Ascending aorta (tissue), 2 donors: ENCODE measurements at regions of chr20 and their contacts with region 1.

Region 1: GRCh38 chr20:5529331-5530148 is 212.8 kb upstream of the PROKR2 start:
- DNase-seq: peak; percentile 31 to 83
- H3K4me3 ChIP-seq: peak overlapping the region in 1 of 2 donors; percentile 47
- H3K27ac ChIP-seq: no peak overlapping the region
- H3K4me1 ChIP-seq: no peaks in the 10 kb centered on the region
- H3K27me3 ChIP-seq: no peaks in the 10 kb centered on the region
- CTCF ChIP-seq: peak; percentile 24 to 77 (median 68)

Region 2: DNA sequence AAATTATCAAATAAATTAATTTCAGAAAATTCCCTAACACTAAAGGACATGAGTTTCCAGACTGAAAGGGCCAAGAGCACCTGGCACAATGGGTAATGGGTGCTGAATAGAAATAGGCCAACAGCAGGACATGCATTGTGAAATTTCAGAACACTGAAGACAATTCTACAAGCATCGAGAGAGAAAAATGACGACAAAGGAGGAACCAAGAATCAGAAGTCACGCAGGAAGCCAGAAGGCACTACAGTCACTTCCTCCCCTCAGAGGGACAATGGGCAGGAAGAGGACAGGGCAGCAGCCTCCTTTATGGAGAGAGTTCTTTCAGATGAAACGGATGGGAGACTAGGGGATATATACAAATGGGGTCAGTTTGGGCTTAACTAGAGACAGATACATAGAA is 439.3 kb before region 1 on chr20:
- intact Hi-C with region 1: no loop called
- DNase-seq: no peak
- H3K4me3 ChIP-seq: no peak overlapping the region
- H3K27ac ChIP-seq: no peak overlapping the region
- H3K4me1 ChIP-seq: no peaks in the 10 kb centered on the region
- H3K27me3 ChIP-seq: no peaks in the 10 kb centered on the region
- CTCF ChIP-seq: no peak

Region 3: DNA sequence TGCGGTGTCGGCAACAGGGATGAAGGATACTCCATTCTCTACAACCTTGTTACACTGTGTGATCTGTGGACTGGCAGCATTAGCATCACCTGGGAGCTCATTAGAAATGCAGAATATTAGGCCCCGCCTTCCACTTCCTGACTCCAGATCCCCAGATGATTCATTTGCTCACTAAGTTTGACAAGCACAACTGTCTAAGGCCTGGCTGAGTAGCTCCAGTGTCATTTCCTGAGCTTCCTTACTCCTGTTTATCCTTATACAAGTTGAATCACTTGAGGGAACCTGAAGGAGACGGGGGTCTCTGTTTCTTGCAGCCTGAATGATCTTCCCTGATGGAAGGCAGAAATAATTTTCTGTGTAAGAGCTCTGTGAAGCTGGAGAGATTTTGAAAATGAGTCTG is 180.1 kb before region 1 on chr20:
- intact Hi-C with region 1: no loop called
- DNase-seq: no peak
- H3K4me3 ChIP-seq: no peak overlapping the region
- H3K27ac ChIP-seq: no peak overlapping the region
- H3K4me1 ChIP-seq: no peaks in the 10 kb centered on the region
- H3K27me3 ChIP-seq: no peaks in the 10 kb centered on the region
- CTCF ChIP-seq: no peak

Region 4: DNA sequence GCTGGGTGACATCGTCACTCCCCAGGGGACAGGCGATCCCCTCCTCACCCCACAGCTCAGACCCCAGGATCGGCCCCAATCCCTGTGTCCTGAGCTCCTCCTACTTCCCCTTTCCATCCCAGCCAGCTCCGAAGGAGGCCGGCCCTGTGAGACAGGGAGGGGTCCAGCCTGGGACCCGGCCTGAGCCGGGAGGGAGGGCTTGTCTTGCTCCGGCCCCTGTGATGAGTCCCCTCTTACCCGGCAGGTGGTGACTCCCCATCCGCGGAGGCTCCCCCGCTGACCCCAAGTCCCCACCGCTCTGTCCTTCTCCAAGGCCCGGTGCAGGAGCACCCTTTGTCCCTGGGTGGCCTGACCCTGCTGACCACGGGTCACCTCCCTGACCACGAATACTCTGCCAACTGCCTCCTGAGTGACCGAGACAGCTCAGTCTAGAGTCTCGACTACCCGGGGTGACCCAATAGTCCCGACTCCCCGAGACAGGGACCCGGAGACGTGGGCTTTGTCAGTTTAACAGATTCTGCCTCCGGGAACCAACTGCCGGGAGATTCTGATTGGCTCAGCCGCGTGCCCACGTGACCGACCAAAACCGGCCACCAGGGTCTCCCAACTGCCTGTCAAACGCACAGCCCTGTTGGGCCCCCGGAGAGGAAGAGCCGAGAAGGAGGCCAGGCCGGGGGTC is 25.3 kb before region 1 on chr20:
- intact Hi-C with region 1: no loop called
- DNase-seq: peak in 1 of 2 donors; percentile 70
- H3K4me3 ChIP-seq: peak overlapping the region; percentile 41 to 62
- H3K27ac ChIP-seq: peak overlapping the region in 1 of 2 donors; percentile 28
- H3K4me1 ChIP-seq: no peaks in the 10 kb centered on the region
- H3K27me3 ChIP-seq: no peaks in the 10 kb centered on the region
- CTCF ChIP-seq: peak in 1 of 3 experiments; percentile 5

Region 5: DNA sequence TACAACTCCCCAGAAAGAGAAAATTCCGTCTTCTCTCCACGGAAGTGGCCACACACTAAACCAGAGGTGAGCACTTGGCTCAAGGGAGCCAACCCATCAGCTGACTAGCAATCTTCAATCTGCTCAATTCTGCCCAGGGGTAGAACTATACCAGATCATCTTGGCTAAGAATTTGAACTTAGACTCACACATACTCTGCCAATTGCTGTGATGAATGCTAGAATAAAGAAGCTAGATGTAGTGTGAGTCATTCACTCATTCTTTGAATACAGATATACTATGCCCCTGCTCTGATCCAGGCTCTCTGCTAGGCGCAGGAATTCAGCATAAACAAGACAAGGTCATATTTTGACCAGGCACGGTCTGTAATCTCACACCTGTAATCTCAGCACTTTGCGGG is 72.8 kb after region 1 on chr20:
- intact Hi-C with region 1: no loop called
- DNase-seq: no peak
- H3K4me3 ChIP-seq: no peak overlapping the region
- H3K27ac ChIP-seq: no peak overlapping the region
- H3K4me1 ChIP-seq: peaks cover 0 to 2% of the 10 kb centered on the region in 2 donors
- H3K27me3 ChIP-seq: no peaks in the 10 kb centered on the region
- CTCF ChIP-seq: no peak

Region 6: DNA sequence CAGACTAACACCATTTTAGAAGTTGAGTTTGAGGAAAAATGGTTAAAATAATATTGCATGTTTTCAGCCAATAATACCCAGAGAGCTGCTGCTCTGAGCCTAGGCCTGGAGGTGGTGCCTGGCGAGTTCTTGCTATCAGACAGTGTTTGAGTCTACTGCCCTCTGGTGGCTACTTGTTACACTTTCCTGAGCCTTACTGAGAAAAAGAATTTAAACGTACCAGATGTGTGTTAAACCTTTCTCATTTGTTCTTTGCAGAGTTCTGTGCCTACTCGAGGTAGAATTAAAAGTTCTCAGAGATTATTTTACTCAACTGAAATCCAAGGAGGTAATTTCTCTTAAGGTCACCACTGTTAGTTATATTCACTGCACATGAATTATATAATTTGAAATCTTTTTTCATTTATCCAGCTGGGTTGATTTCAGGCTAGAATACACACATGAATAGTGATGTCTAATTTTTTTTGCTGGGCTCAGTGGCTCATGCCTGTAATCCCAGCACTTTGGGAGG is 258.9 kb after region 1 on chr20:
- intact Hi-C with region 1: loop called (anchors 1 kb)
- DNase-seq: peak in 1 of 2 donors; percentile 86
- H3K4me3 ChIP-seq: no peak overlapping the region
- H3K27ac ChIP-seq: no peak overlapping the region
- H3K4me1 ChIP-seq: peaks cover 5 to 9% of the 10 kb centered on the region in 2 donors
- H3K27me3 ChIP-seq: no peaks in the 10 kb centered on the region
- CTCF ChIP-seq: peak; percentile 68 to 85 (median 82)

Region 7: DNA sequence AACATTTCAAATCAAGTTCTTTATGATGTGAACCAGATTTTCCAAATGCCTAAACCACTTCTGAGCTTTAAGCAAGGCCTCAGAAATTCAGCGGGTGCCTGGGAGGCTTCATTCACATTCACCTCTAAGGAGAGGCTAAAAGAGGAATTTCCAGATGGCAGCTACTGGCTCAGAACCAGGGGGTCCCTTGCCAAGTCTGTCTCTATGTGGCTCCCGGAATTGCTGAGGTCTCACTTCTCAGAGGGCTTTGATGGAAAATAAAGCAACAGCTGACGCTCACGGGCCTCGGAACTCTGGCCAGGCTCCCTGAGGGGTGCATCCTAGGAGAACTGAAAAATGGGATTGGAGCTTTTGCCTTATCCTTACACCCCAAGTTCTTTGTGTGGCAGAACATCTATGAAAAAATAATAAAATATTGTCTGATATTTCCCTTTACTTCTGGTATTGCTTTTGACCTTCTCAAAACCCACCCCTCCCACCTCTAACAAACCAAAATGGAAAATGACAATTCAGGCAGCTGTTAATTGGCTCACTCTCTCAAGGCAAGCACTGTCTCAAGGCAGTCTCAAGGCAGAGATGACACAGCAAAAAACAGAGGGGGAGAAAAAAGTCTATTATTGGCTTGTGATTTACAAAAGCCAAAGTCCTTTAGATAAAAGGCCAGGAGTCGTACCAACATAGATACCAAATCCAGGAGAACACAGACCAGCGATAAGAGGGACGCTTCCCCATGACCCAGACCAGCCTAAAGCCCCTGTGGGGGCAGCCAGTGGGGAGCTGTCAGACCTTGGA is 546.1 kb after region 1 on chr20:
- intact Hi-C with region 1: loop called (anchors 2 kb)
- DNase-seq: no peak
- H3K4me3 ChIP-seq: no peak overlapping the region
- H3K27ac ChIP-seq: no peak overlapping the region
- H3K4me1 ChIP-seq: no peaks in the 10 kb centered on the region
- H3K27me3 ChIP-seq: no peaks in the 10 kb centered on the region
- CTCF ChIP-seq: no peak